Astrocyte of the cerebellum (primary cell): ENCODE measurements at regions of chr1 and their contacts with region 1.

Region 1: GRCh38 chr1:1990222-1990621 is 13.4 kb downstream of the CFAP74 start:
- DNase-seq: no peak
- H3K4me3 ChIP-seq: no peak overlapping the region
- CTCF ChIP-seq: no peak

Region 2: DNA sequence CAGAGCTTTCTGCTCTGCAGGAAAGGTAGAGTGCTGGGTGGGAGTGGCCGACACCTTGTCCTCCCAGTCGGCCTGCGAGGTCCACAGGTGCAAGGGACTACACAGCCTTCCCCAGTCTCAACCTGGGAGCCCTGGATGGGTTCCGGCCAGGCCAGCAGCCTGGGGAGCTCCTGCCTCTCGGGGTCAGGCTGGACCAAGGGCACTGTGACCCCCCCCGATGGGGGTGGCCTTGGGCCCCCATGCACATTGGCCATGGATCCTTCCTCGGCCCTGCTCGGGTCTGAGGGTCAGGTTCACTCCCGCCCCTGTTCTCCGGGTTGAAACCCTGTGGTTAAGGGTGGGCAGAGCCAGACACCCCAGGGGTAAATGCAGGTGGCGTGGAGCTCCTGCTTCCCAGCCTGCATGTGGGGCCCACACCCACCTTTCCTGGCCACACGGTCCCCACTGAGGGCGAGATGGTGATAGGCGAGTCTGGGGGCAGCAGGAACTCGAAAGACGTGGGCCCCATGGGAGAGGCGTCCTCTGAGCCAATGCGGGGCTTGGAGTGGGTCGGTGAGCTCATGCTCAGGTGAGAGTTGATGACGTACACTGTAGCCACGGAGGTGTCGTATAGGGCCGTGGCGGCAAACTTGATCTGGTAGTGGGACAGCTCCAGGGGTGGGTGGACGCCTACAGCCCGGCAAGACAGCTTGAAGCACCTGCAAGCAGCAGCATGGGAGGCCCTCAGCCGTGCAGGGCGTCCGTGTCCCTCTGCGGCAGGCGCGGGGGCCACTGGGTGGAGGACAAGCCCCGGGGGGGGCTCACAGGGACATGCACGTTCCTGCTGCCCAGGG is 60.4 kb before region 1 on chr1:
- in situ Hi-C with region 1: loop called (anchors 5 kb)
- DNase-seq: no peak
- H3K4me3 ChIP-seq: no peak overlapping the region
- CTCF ChIP-seq: no peak

Region 3: DNA sequence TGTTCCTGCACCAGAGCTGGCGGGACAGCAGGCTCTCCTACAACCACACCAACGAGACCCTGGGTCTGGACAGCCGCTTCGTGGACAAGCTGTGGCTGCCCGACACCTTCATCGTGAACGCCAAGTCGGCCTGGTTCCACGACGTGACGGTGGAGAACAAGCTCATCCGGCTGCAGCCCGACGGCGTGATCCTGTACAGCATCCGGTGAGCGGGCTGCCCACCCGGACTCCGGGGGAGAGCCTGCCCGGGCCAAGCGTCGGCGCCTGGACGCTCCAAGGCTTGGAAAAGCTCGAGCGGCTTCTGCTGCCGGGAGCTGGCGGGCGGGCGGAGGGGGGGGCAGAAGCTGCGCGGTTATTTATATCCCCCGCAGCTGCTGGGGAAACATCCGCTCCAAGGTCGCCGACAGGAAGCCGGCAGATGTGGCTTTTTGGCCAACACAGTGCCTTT is 35.3 kb after region 1 on chr1:
- in situ Hi-C with region 1: loop called (anchors 5 kb)
- DNase-seq: no peak
- H3K4me3 ChIP-seq: no peak overlapping the region
- CTCF ChIP-seq: no peak